CD8-positive, alpha-beta T cell (primary cell): ENCODE measurements at regions of chr1 and their contacts with region 1.

Region 1: DNA sequence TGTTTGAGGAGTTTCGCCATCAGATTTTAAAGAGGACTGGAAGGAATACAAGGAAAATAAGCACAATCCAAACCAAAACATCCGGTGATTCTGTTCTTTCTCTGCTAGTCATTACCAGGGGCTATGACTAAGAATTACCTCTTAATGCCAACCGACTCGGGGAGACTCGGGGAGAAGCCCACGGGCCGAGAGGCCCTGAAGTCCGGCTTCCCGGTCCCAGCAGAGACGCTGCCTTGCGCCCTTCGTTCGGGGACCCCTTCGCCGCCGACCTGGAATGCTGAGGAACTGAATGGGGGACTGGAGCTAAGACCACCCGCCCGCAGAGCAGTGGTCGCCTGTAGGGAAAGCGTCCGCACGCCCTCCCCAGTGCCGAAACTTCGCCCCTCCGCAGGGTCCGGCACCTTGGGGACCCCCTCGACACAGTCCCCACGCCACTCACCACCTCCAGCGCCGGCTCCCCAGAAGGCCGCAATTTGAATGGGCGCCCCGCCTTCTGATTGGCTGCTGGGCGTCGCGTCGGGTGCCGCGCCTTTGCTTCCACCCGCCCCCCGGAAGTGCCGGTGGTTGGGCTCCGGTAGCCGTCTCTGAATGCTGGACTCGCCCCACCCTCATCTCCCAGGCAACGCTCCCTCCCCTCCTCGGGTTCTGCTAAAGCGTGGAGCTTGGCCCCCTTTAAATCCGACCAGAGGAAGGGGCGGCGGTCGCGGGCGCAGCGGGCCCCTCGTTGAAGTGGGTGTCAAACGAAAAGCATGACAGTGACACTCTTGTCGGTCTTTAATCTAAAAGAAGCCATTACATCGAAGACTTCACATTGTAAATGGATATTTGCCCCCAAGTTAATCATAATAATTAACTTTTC is at the start of gene KIF14:
- DNase-seq: peak; percentile 84 to 95 (median 91)
- ATAC-seq: peak; percentile 95
- H3K4me3 ChIP-seq: peak within 1 kb of the TSS; percentile 60 to 69
- H3K4me3 Mint-ChIP-seq: peak within 1 kb of the TSS; percentile 96
- H3K27ac ChIP-seq: peak within 1 kb of the TSS; percentile 44 to 45
- H3K27ac Mint-ChIP-seq: peak within 1 kb of the TSS; percentile 87
- H3K4me1 ChIP-seq: peaks cover 21% of the 10 kb centered on the region
- H3K4me1 Mint-ChIP-seq: peaks cover 15% of the 10 kb centered on the region
- H3K27me3 ChIP-seq: no peaks in the 10 kb centered on the region
- H3K27me3 Mint-ChIP-seq: no peaks in the 10 kb centered on the region
- CTCF ChIP-seq: no peak
- total RNA-seq, gene KIF14: 0.05 to 0.17 TPM

Region 2: GRCh38 chr1:200409761-200410565 is 210.5 kb before region 1 on chr1 and contains the start of gene ZNF281:
- CTCF ChIA-PET with region 1: no interaction called
- POLR2A ChIA-PET with region 1: no interaction called
- intact Hi-C with region 1: loop called in 1 of 2 experiments (anchors 5 kb)
- DNase-seq: peak; percentile 91 to 98 (median 95)
- ATAC-seq: peak; percentile 95
- H3K4me3 ChIP-seq: peak within 1 kb of the TSS; percentile 78 to 95
- H3K4me3 Mint-ChIP-seq: peak within 1 kb of the TSS; percentile 99
- H3K27ac ChIP-seq: peak within 1 kb of the TSS; percentile 71 to 76
- H3K27ac Mint-ChIP-seq: peak within 1 kb of the TSS; percentile 98
- H3K4me1 ChIP-seq: peaks cover 47% of the 10 kb centered on the region
- H3K4me1 Mint-ChIP-seq: peaks cover 52% of the 10 kb centered on the region
- H3K27me3 ChIP-seq: no peaks in the 10 kb centered on the region
- H3K27me3 Mint-ChIP-seq: no peaks in the 10 kb centered on the region
- CTCF ChIP-seq: no peak
- total RNA-seq, gene ZNF281: 31.0 to 32.9 TPM

Region 3: DNA sequence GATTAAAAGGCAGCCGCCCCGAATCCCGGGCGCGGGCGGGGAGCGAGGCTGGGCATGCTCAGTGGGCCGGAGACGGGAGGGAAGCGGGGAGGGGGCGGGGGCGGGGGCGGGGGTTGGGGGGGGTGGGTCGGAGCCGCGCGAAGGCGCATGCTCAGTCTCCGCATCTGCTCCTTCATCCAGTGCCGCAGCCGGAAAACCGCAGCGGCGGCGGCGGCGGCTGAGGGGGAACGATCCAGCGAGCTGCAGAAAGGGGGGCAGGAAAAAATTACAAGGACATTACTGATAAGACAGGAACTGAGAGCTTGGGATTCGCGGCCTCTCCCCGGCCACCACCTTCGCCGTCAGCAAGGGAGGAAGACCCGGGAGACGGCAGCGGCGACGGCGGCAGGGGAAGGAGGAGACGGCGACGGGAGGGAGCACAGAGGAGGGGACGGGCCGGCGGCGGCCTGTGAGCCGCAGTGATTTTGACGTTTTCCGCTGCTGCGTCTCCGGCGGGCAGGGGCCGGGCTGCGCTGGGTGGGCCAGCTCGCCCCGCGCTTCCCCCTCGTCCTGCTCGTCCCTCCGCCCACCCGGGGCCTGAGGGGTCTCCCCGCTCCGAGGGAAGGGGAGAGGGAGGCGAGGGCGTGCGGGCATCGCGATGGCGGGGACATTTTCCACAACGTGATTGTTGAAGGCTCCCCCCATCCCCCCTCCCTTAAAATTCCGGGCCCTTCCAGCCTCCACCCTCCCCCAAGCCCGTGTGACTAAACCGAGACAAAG is 118.4 kb after region 1 on chr1 and contains the start of gene CAMSAP2:
- CTCF ChIA-PET with region 1: interaction called, 7 read pairs
- POLR2A ChIA-PET with region 1: no interaction called
- intact Hi-C with region 1: loop called (anchors 1 to 5 kb)
- DNase-seq: peak; percentile 16 to 78 (median 63)
- ATAC-seq: peak; percentile 68
- H3K4me3 ChIP-seq: peak within 1 kb of the TSS; percentile 82 to 84
- H3K4me3 Mint-ChIP-seq: peak within 1 kb of the TSS; percentile 93
- H3K27ac ChIP-seq: peak within 1 kb of the TSS; percentile 28 to 41
- H3K27ac Mint-ChIP-seq: peak within 1 kb of the TSS; percentile 84
- H3K4me1 ChIP-seq: peaks cover 25% of the 10 kb centered on the region
- H3K4me1 Mint-ChIP-seq: peaks cover 31% of the 10 kb centered on the region
- H3K27me3 ChIP-seq: peaks cover 0 to 4% of the 10 kb centered on the region in 2 experiments
- H3K27me3 Mint-ChIP-seq: no peaks in the 10 kb centered on the region
- CTCF ChIP-seq: no peak
- total RNA-seq, gene CAMSAP2: 1.7 to 2.2 TPM

Region 4: DNA sequence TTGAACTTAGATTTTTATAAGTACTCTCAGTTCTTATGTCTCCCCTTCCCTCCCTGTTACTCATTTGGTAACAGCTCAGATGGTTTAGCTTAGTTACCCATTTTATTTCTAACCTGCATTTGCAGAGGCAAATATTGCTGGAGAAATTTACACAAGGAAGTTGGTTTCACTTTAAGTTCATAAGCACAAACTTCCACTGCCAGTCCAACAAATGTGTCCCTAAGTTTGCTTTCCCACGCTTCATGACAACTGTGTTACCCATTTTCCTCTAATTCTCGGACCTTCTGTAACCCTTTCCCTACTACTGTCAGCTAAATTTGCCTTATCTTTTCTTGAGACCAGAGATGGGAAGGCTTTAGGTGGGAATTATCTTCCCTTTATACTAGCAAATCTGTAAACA is 188.3 kb after region 1 on chr1:
- CTCF ChIA-PET with region 1: interaction called, 81 read pairs
- POLR2A ChIA-PET with region 1: no interaction called
- intact Hi-C with region 1: no loop called
- DNase-seq: no peak
- ATAC-seq: no peak
- H3K4me3 ChIP-seq: no peak overlapping the region
- H3K4me3 Mint-ChIP-seq: no peak overlapping the region
- H3K27ac ChIP-seq: no peak overlapping the region
- H3K27ac Mint-ChIP-seq: no peak overlapping the region
- H3K4me1 ChIP-seq: no peaks in the 10 kb centered on the region
- H3K4me1 Mint-ChIP-seq: no peaks in the 10 kb centered on the region
- H3K27me3 ChIP-seq: no peaks in the 10 kb centered on the region
- H3K27me3 Mint-ChIP-seq: no peaks in the 10 kb centered on the region
- CTCF ChIP-seq: no peak

Region 5: GRCh38 chr1:201023517-201023902 is 403.0 kb after region 1 on chr1 and contains the start of gene KIF21B:
- CTCF ChIA-PET with region 1: interaction called, 6 read pairs
- POLR2A ChIA-PET with region 1: no interaction called
- intact Hi-C with region 1: loop called (anchors 5 kb)
- DNase-seq: peak; percentile 87 to 95 (median 91)
- ATAC-seq: peak; percentile 80
- H3K4me3 ChIP-seq: peak within 1 kb of the TSS; percentile 64 to 73
- H3K4me3 Mint-ChIP-seq: peak within 1 kb of the TSS; percentile 94
- H3K27ac ChIP-seq: peak within 1 kb of the TSS; percentile 62 to 73
- H3K27ac Mint-ChIP-seq: peak within 1 kb of the TSS; percentile 99
- H3K4me1 ChIP-seq: peaks cover 56% of the 10 kb centered on the region
- H3K4me1 Mint-ChIP-seq: peaks cover 71% of the 10 kb centered on the region
- H3K27me3 ChIP-seq: no peaks in the 10 kb centered on the region
- H3K27me3 Mint-ChIP-seq: no peaks in the 10 kb centered on the region
- CTCF ChIP-seq: no peak
- total RNA-seq, gene KIF21B: 62.2 to 63.5 TPM

Region 6: DNA sequence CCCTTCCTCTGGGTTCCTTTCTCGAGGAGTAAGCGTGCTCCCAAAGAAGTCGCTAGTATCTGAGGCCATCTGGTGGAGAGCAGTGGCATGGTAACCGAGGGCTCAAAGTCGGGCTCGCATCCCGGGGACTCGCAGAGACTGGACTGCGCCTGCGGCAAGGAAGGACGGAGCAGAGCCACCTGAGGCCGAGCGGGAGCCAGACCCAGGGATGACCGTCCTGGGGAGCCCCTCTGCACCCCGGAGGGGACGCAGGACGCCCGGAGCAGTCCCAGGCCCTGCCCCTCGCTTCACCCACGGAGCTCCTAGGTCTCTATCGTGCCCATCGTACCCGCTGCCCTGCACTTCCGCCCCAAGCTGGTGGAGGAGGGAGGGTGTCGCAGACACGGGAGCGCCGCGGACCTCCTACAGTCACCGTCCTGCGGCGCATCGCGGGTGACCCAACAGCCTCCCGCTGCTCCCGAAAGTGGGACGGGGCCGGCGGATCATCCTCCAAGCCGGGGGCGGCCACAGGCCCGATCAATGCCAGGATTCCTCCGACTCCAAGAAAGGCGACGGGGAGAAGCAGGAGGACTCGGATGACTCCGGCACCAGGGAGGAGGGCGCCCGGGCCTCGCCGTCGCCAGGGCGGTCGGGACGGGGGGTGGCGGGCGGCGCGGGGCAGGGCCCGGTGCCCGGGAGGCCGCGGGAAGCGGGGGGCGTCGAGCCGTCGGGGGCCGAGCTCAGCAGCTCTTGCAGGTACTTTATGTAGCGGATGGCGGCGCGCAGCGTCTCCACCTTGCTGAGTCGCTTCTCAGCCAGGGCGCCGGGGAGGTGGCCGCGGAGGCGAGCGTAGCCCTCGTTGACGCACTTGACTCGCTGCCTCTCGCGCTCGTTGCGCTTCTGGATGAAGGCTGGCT is 494.0 kb after region 1 on chr1:
- CTCF ChIA-PET with region 1: no interaction called
- POLR2A ChIA-PET with region 1: interaction called, 3 read pairs
- intact Hi-C with region 1: loop called in 1 of 2 experiments (anchors 10 kb)
- DNase-seq: peak; percentile 47 to 85 (median 71)
- ATAC-seq: peak; percentile 80
- H3K4me3 ChIP-seq: peak overlapping the region; percentile 67 to 87
- H3K4me3 Mint-ChIP-seq: peak overlapping the region; percentile 91
- H3K27ac ChIP-seq: peak overlapping the region; percentile 40 to 51
- H3K27ac Mint-ChIP-seq: peak overlapping the region; percentile 90
- H3K4me1 ChIP-seq: peaks cover 13% of the 10 kb centered on the region
- H3K4me1 Mint-ChIP-seq: peaks cover 29% of the 10 kb centered on the region
- H3K27me3 ChIP-seq: no peaks in the 10 kb centered on the region
- H3K27me3 Mint-ChIP-seq: no peaks in the 10 kb centered on the region
- CTCF ChIP-seq: peak; percentile 72

Region 7: GRCh38 chr1:201828820-201829774 is 1208.6 kb after region 1 on chr1 and contains the start of gene IPO9:
- CTCF ChIA-PET with region 1: no interaction called
- POLR2A ChIA-PET with region 1: no interaction called
- intact Hi-C with region 1: loop called in 1 of 2 experiments (anchors 5 kb)
- DNase-seq: peak; percentile 89 to 96 (median 95)
- ATAC-seq: peak; percentile 96
- H3K4me3 ChIP-seq: peak within 1 kb of the TSS; percentile 95 to 100
- H3K4me3 Mint-ChIP-seq: peak within 1 kb of the TSS; percentile 97
- H3K27ac ChIP-seq: peak within 1 kb of the TSS; percentile 90
- H3K27ac Mint-ChIP-seq: peak within 1 kb of the TSS; percentile 93
- H3K4me1 ChIP-seq: peaks cover 34% of the 10 kb centered on the region
- H3K4me1 Mint-ChIP-seq: peaks cover 42% of the 10 kb centered on the region
- H3K27me3 ChIP-seq: no peaks in the 10 kb centered on the region
- H3K27me3 Mint-ChIP-seq: no peaks in the 10 kb centered on the region
- CTCF ChIP-seq: peak; percentile 96
- total RNA-seq, gene IPO9: 14.4 to 19.2 TPM